ENCODE measurements at regions of chr14 and their contacts with region 1.

Region 1: GRCh38 chr14:20327005-20327869 is 5.8 kb downstream of the CCNB1IP1 start:
- DNase-seq: no peak
- H3K4me3 Mint-ChIP-seq: peak overlapping the region; percentile 0
- H3K27ac Mint-ChIP-seq: peak overlapping the region; percentile 43
- H3K4me1 Mint-ChIP-seq: peaks cover 40% of the 10 kb centered on the region
- H3K27me3 Mint-ChIP-seq: no peaks in the 10 kb centered on the region

Region 2: DNA sequence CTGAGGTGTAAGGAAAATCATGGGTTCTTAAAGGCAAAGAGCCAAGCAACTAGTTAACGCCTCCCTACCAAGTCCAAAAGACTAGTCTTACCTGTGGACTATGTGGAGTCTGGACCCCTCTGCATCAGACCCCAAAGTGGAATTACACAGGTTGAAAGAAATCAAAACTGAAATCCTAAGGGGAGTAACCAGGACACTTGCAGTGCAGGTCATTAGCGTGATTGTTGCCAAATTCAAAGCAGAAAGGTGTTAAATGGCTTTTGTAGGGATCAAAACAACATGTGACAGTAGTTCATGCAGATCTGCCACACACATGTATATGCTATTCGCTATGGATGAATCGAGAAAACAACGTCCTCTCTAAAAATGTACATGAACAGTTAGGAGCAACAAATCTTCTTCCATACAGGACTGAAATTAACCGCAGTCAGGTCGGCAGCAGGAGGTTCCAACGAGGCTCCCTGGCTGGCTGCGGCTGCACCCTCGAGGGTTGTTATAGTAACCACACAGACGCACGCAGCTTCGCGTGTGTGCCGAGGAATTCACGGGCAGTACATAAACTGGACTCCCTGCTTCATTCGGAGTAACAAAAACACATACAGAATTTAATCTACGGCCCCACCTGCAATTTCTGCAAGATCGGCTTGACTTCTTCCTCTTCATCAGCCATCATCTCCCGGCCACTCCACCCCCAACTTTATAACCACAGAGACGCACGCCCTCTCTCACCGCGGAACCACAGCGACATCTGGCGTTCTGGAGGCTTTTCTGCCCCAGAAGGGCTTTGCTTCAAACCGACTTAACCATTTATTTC is 21.8 kb before region 1 on chr14 and contains the start of gene TTC5:
- CTCF ChIA-PET with region 1: interaction called, 16 read pairs
- POLR2A ChIA-PET with region 1: no interaction called
- intact Hi-C with region 1: loop called (anchors 2 kb)
- DNase-seq: peak; percentile 93
- H3K4me3 Mint-ChIP-seq: peak within 1 kb of the TSS; percentile 89
- H3K27ac Mint-ChIP-seq: peak within 1 kb of the TSS; percentile 80
- H3K4me1 Mint-ChIP-seq: peaks cover 24% of the 10 kb centered on the region
- H3K27me3 Mint-ChIP-seq: no peaks in the 10 kb centered on the region
- total RNA-seq, gene TTC5: 19.0 to 22.7 TPM

Region 3: DNA sequence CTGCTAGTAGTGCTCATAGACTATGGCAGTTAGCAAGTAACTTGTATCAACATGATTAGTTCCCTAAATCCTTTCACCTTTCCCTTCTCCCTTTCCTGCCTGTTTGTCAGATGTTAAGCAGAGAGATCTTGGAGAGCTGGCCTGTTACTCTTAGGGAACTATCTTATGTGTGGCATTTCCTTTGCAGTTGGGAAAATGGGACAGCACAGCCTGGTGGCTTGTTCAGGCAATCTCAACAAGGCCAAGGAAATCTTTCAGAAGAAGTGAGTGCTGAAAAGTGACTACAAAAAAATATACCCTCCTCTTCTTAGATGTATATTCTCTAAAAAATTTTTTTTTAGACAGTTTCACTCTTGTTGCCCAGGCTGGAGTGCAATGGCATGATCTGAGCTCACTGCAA is 23.6 kb after region 1 on chr14:
- CTCF ChIA-PET with region 1: interaction called, 26 read pairs
- POLR2A ChIA-PET with region 1: no interaction called
- intact Hi-C with region 1: no loop called
- DNase-seq: no peak
- H3K4me3 Mint-ChIP-seq: no peak overlapping the region
- H3K27ac Mint-ChIP-seq: no peak overlapping the region
- H3K4me1 Mint-ChIP-seq: no peaks in the 10 kb centered on the region
- H3K27me3 Mint-ChIP-seq: no peaks in the 10 kb centered on the region

Region 4: GRCh38 chr14:20477211-20477876 is 150.1 kb after region 1 on chr14:
- CTCF ChIA-PET with region 1: no interaction called
- POLR2A ChIA-PET with region 1: no interaction called
- intact Hi-C with region 1: no loop called
- DNase-seq: peak; percentile 49
- H3K4me3 Mint-ChIP-seq: no peak overlapping the region
- H3K27ac Mint-ChIP-seq: peak overlapping the region; percentile 91
- H3K4me1 Mint-ChIP-seq: peaks cover 70% of the 10 kb centered on the region
- H3K27me3 Mint-ChIP-seq: no peaks in the 10 kb centered on the region